Transverse colon (tissue), 4 donors: ENCODE measurements at regions of chr5 and their contacts with region 1.

Region 1: GRCh38 chr5:149643781-149644180 is 62.5 kb downstream of the ARHGEF37 start:
- DNase-seq: no peak
- H3K4me3 ChIP-seq: no peak overlapping the region
- H3K27ac ChIP-seq: no peak overlapping the region
- H3K4me1 ChIP-seq: peaks cover 14 to 26% (median 16%) of the 10 kb centered on the region in 4 donors
- H3K27me3 ChIP-seq: no peaks in the 10 kb centered on the region
- CTCF ChIP-seq: no peak
- EP300 ChIP-seq: no peak
- POLR2A ChIP-seq: no peak

Region 2: DNA sequence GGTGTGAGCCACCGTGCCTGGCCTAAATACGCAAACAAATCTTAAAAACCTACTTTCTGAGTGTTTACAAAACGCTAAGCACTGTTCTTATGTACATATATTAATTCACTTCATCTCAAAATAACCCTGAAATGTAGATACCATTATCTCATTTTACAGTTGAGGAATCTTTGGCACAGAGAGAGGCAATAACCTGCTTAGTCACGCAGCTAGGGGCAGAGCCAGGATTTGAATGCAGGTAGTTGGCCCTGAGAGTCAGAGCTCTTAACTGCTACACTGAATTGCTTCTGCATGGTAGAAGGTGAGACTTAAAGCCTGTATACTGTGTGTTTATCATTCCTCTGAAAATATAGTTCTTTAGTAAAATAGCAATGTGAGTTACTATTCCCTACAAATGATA is 40.6 kb before region 1 on chr5:
- in situ Hi-C with region 1: no loop called
- intact Hi-C with region 1: loop called (anchors 2 kb)
- DNase-seq: peak; percentile 41
- H3K4me3 ChIP-seq: no peak overlapping the region
- H3K27ac ChIP-seq: peak overlapping the region; percentile 50 to 58 (median 54)
- H3K4me1 ChIP-seq: peaks cover 8 to 42% (median 18%) of the 10 kb centered on the region in 4 donors
- H3K27me3 ChIP-seq: no peaks in the 10 kb centered on the region
- CTCF ChIP-seq: no peak
- EP300 ChIP-seq: no peak
- POLR2A ChIP-seq: no peak